Heart left ventricle (tissue), 16 donors: ENCODE measurements at regions of chr4 and their contacts with region 1.

Region 1: GRCh38 chr4:77007358-77008191 is 58.0 kb downstream of the SEPTIN11 start:
- DNase-seq: peak in 2 of 5 donors; percentile 37 to 45
- ATAC-seq: peak in 3 of 4 donors; percentile 72 to 89 (median 77)
- H3K4me3 ChIP-seq: no peak overlapping the region
- H3K27ac ChIP-seq: peak overlapping the region in 8 of 12 donors; percentile 4 to 28 (median 10)
- H3K4me1 ChIP-seq: peaks cover 4 to 78% (median 39%) of the 10 kb centered on the region in 12 donors
- H3K27me3 ChIP-seq: no peaks in the 10 kb centered on the region
- CTCF ChIP-seq: no peak
- POLR2A ChIP-seq: no peak

Region 2: GRCh38 chr4:76198411-76199237 is 809.0 kb before region 1 on chr4:
- intact Hi-C with region 1: loop called in 1 of 10 experiments (anchors 10 kb)
- DNase-seq: peak in 4 of 5 donors; percentile 49 to 76 (median 72)
- ATAC-seq: peak; percentile 65 to 83 (median 74)
- H3K4me3 ChIP-seq: peak overlapping the region in 2 of 12 donors; percentile 1 to 5
- H3K27ac ChIP-seq: peak overlapping the region; percentile 43 to 91 (median 67)
- H3K4me1 ChIP-seq: peaks cover 26 to 97% (median 75%) of the 10 kb centered on the region in 12 donors
- H3K27me3 ChIP-seq: no peaks in the 10 kb centered on the region
- CTCF ChIP-seq: no peak
- POLR2A ChIP-seq: no peak

Region 3: GRCh38 chr4:76765473-76766183 is 241.9 kb before region 1 on chr4:
- intact Hi-C with region 1: no loop called
- DNase-seq: no peak
- ATAC-seq: peak in 2 of 4 donors; percentile 50 to 68
- H3K4me3 ChIP-seq: no peak overlapping the region
- H3K27ac ChIP-seq: peak overlapping the region in 3 of 12 donors; percentile 34 to 41 (median 38)
- H3K4me1 ChIP-seq: peaks cover 0 to 11% (median 0%) of the 10 kb centered on the region in 12 donors
- H3K27me3 ChIP-seq: no peaks in the 10 kb centered on the region
- CTCF ChIP-seq: no peak
- POLR2A ChIP-seq: no peak

Region 4: GRCh38 chr4:77178560-77178959 is 171.0 kb after region 1 on chr4:
- intact Hi-C with region 1: no loop called
- DNase-seq: no peak
- ATAC-seq: no peak
- H3K4me3 ChIP-seq: no peak overlapping the region
- H3K27ac ChIP-seq: no peak overlapping the region
- H3K4me1 ChIP-seq: peaks cover 0 to 3% (median 0%) of the 10 kb centered on the region in 12 donors
- H3K27me3 ChIP-seq: no peaks in the 10 kb centered on the region
- CTCF ChIP-seq: no peak
- POLR2A ChIP-seq: no peak

Region 5: GRCh38 chr4:77443941-77444340 is 436.4 kb after region 1 on chr4:
- intact Hi-C with region 1: no loop called
- DNase-seq: no peak
- ATAC-seq: no peak
- H3K4me3 ChIP-seq: no peak overlapping the region
- H3K27ac ChIP-seq: no peak overlapping the region
- H3K4me1 ChIP-seq: no peaks in the 10 kb centered on the region
- H3K27me3 ChIP-seq: no peaks in the 10 kb centered on the region
- CTCF ChIP-seq: no peak
- POLR2A ChIP-seq: no peak